Common myeloid progenitor, CD34-positive (primary cell): ENCODE measurements at regions of chr20 and their contacts with region 1.

Region 1: DNA sequence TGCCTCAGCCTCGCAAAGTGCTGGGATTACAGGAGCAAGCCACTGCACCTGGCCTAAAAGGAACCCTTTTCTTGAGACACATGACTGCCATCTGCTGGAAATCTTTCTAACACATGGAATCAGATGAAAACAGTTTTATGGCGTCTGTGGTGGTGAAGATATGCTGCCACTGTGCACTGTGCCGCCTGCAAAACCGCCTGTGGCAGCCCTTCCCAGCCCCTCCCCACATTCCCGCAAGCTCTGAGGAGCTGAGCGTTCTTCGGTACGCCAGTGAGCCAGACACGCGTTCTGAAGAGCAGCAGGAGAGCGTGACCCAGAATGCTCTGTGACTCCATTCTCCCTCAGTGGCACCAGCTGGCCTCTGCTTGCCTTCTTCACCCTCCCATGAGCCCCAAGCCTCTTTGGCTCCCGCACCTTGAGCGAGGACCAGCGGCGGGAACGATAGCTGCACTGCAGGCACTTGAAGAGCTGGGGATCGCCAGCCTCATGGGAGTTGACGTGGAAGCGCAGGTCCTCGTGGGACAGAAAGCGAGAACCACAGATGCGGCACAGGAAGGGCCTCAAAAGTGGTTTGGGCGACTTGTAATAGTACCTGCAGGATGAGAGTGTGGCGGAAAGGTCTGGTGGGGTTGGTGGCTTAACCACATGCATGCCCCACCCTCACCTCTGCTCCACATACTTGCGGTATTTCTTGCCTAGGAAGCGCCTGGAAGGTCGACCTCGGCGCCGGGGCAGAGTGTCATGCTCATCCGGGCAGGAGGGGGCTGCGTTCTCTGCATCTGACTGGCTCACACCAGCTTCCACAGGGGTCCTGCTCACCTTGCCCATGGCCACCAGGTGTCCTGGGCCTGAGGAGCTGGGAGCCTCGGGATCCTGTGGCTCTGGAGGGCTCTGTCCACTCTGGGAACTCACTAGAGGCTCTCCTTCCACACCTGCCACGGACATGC is 8.7 kb downstream of the ZNF335 start:
- DNase-seq: peak; percentile 44 to 75 (median 69)
- H3K4me3 ChIP-seq: no peak overlapping the region
- H3K27ac ChIP-seq: no peak overlapping the region
- H3K4me1 ChIP-seq: peaks cover 0 to 1% (median under 1%) of the 10 kb centered on the region in 4 experiments
- H3K27me3 ChIP-seq: no peaks in the 10 kb centered on the region

Region 2: GRCh38 chr20:45946149-45946970 is 17.0 kb before region 1 on chr20:
- CTCF ChIA-PET with region 1: interaction called, 75 read pairs
- POLR2A ChIA-PET with region 1: interaction called, 6 read pairs
- DNase-seq: peak in 2 of 3 donors; percentile 40 to 46
- H3K4me3 ChIP-seq: no peak overlapping the region
- H3K27ac ChIP-seq: peak overlapping the region in 1 of 2 experiments; percentile 7
- H3K4me1 ChIP-seq: no peaks in the 10 kb centered on the region
- H3K27me3 ChIP-seq: no peaks in the 10 kb centered on the region

Region 3: GRCh38 chr20:45951925-45952834 is 11.2 kb before region 1 on chr20:
- CTCF ChIA-PET with region 1: interaction called, 75 read pairs
- POLR2A ChIA-PET with region 1: interaction called, 6 read pairs
- DNase-seq: no peak
- H3K4me3 ChIP-seq: no peak overlapping the region
- H3K27ac ChIP-seq: peak overlapping the region in 1 of 2 experiments; percentile 17
- H3K4me1 ChIP-seq: no peaks in the 10 kb centered on the region
- H3K27me3 ChIP-seq: no peaks in the 10 kb centered on the region

Region 4: DNA sequence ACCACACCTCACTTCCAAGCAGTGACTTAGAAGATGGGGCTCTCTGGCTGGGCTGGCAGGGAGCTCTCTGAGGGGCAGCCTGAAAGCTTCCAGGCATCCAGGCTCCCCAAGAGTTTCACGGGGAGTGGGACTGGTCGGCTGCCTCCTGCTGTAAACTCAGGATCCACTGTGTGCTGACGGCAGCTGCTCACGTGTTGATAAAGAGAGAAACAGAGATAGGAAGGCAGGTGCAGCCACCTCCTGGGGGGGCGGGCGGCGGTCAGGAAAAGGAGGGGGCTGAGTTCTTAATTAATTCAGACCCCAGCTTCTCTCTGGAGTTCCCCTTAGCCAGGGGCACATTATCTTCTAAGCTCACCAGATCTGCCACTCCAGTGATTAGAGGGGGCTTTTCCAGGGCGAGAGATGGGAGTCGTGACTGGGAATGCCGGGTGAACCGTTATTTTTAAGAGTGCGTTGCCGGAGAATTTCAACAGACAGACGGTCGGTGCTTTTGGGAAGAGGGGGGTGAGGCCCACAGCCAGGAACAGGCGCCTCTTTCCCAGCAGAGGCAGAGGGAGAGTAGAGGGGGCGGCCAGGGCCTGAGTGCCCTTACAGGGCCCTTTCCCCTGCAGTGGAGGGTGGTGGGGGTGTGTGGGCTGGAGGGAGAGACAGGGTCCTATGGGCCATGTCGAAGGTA is 225.7 kb after region 1 on chr20:
- CTCF ChIA-PET with region 1: no interaction called
- POLR2A ChIA-PET with region 1: no interaction called
- DNase-seq: no peak
- H3K4me3 ChIP-seq: no peak overlapping the region
- H3K27ac ChIP-seq: no peak overlapping the region
- H3K4me1 ChIP-seq: no peaks in the 10 kb centered on the region
- H3K27me3 ChIP-seq: peaks cover 0 to 33% (median 14%) of the 10 kb centered on the region in 5 experiments

Region 5: GRCh38 chr20:46752728-46753127 is 789.4 kb after region 1 on chr20:
- CTCF ChIA-PET with region 1: no interaction called
- POLR2A ChIA-PET with region 1: no interaction called
- DNase-seq: peak; percentile 42 to 75 (median 67)
- H3K4me3 ChIP-seq: no peak overlapping the region
- H3K27ac ChIP-seq: no peak overlapping the region
- H3K4me1 ChIP-seq: no peaks in the 10 kb centered on the region
- H3K27me3 ChIP-seq: peaks cover 0 to 6% (median 2%) of the 10 kb centered on the region in 5 experiments